PC-9 (cell line): ENCODE measurements at regions of chr14 and their contacts with region 1.

Region 1: GRCh38 chr14:63423889-63424288 is 105.2 kb upstream of the GPHB5 start:
- DNase-seq: no peak
- H3K4me3 ChIP-seq: no peak overlapping the region
- H3K27ac ChIP-seq: no peak overlapping the region
- H3K4me1 ChIP-seq: no peaks in the 10 kb centered on the region
- H3K27me3 ChIP-seq: no peaks in the 10 kb centered on the region
- CTCF ChIP-seq: no peak

Region 2: DNA sequence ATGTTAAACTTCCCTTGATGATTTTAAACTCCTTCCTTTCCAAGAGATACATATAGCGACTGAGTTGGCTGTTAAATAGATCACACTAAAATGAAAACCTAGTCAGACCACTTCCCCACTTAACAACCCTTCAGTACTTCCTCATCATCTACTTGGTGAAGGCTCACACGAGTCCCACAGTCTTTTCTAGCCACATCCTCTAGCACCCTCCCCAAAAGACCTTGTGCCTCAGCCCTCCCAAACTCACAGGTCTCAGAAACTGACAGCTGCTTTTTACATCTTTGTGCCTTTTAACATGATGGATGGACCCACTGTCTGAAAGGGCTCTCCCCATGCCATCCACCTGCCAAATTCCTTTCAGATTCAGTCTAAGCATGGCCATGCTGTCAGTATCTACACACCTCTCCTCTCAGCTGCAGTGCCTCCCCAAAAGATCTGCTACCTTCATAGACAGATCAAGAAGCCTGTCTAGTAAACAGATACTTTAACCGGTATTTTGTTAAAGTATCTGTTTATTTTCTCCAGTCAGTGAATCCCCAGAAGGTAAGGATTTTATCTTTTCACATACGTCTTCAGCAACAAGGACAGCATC is 40.0 kb before region 1 on chr14:
- CTCF ChIA-PET with region 1: no interaction called
- POLR2A ChIA-PET with region 1: no interaction called
- intact Hi-C with region 1: no loop called
- DNase-seq: no peak
- H3K4me3 ChIP-seq: no peak overlapping the region
- H3K27ac ChIP-seq: no peak overlapping the region
- H3K4me1 ChIP-seq: no peaks in the 10 kb centered on the region
- H3K27me3 ChIP-seq: no peaks in the 10 kb centered on the region
- CTCF ChIP-seq: no peak

Region 3: DNA sequence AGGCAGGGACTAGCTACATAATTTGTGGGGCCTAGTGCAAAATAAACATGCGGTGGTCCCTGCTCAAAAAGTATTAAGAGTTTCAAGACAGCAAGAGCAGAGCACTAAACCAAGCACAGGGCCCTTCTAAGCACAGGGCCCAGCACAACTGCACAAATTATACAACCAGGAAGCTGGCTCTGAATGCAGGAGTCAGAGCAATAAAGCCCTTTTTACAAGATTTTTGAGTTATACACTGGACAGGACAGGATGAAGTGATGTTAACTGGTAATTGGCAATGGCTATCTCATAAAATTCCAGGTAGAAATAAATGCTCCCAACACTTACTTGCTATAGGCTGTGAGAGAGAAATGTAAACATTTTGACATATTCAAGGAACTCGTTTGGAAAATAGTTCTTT is 19.0 kb before region 1 on chr14:
- CTCF ChIA-PET with region 1: no interaction called
- POLR2A ChIA-PET with region 1: interaction called, 6 read pairs
- intact Hi-C with region 1: loop called (anchors 2 kb)
- DNase-seq: no peak
- H3K4me3 ChIP-seq: no peak overlapping the region
- H3K27ac ChIP-seq: no peak overlapping the region
- H3K4me1 ChIP-seq: no peaks in the 10 kb centered on the region
- H3K27me3 ChIP-seq: no peaks in the 10 kb centered on the region
- CTCF ChIP-seq: no peak